Ascending aorta (tissue), 2 donors: ENCODE measurements at regions of chr4 and their contacts with region 1.

Region 1: GRCh38 chr4:1167247-1167949 is 5.0 kb downstream of the SPON2 start:
- DNase-seq: peak in 1 of 2 donors; percentile 89
- H3K4me3 ChIP-seq: peak overlapping the region; percentile 72 to 91
- H3K27ac ChIP-seq: no peak overlapping the region
- H3K4me1 ChIP-seq: peaks cover 8 to 22% of the 10 kb centered on the region in 2 donors
- H3K27me3 ChIP-seq: peaks cover 20% of the 10 kb centered on the region
- CTCF ChIP-seq: peak; percentile 76 to 89 (median 85)

Region 2: DNA sequence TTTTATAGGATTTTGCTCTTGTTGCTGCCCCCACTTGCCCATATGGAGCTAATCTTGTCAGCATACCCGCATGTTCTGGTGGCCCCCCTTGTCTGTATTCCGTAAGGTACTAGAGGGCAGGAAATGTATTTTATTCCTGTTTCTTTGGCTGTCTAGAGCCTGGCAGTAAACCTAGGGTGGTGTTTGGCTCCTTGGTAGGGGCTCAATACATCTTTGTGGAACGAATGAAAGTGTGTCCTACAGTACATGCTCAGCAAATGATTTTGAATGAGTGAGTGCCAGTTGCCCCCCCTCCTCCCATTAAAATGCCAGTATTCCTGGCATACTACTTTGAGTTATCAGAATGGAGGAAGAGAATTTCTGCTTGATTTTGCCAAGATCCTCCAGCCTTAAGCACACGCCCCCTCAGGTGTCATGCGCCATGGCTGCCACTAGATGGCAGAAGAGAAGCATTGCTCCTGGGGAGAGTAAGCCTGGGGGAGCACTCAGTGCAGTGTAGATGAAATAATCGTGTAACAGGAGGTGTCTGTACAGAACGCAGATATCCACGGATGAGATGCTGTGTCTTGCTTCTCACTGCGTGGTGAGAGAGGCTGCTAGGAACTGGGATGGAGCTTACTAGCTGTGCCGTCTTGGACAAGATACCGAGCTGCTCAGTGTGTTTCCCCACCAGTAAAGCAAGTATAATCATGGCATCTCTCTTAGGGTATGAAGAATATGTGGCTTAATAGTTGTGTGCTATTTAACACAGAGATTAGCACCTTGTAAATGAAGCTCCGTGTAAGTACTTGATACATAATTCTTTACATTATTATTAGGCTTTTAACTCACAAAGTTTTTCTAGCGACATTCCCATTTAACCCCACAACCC is 36.8 kb before region 1 on chr4:
- intact Hi-C with region 1: loop called (anchors 1 kb)
- DNase-seq: peak in 1 of 2 donors; percentile 79
- H3K4me3 ChIP-seq: no peak overlapping the region
- H3K27ac ChIP-seq: no peak overlapping the region
- H3K4me1 ChIP-seq: no peaks in the 10 kb centered on the region
- H3K27me3 ChIP-seq: no peaks in the 10 kb centered on the region
- CTCF ChIP-seq: peak; percentile 92 to 100 (median 98)

Region 3: DNA sequence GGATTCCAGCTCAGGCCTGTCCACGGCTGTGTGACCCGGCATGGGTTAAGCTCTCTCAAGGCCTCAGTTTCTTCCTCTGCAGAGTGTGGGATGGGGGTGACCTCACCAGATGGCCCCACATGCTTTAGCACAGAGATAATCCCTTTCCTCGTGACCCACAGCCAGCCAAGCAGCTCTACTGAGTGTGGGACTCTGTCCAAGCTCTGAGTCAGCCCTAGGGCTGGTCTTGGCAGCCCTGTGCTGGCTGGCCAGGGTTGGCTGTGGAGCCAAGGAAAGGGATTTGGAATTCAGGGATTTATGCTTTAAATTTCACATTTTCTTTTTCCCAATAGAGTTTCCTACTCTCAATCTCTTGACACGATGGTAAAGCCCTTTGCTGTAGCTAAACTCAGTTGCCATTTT is 24.7 kb after region 1 on chr4:
- intact Hi-C with region 1: loop called (anchors 2 kb)
- DNase-seq: peak; percentile 76 to 94
- H3K4me3 ChIP-seq: peak overlapping the region in 1 of 2 donors; percentile 25
- H3K27ac ChIP-seq: peak overlapping the region; percentile 79 to 87
- H3K4me1 ChIP-seq: peaks cover 18 to 23% of the 10 kb centered on the region in 2 donors
- H3K27me3 ChIP-seq: no peaks in the 10 kb centered on the region
- CTCF ChIP-seq: no peak

Region 4: GRCh38 chr4:1207603-1208265 is 40.3 kb after region 1 on chr4:
- intact Hi-C with region 1: loop called (anchors 2 kb)
- DNase-seq: peak in 1 of 2 donors; percentile 67
- H3K4me3 ChIP-seq: no peak overlapping the region
- H3K27ac ChIP-seq: no peak overlapping the region
- H3K4me1 ChIP-seq: peaks cover 25 to 31% of the 10 kb centered on the region in 2 donors
- H3K27me3 ChIP-seq: no peaks in the 10 kb centered on the region
- CTCF ChIP-seq: no peak

Region 5: DNA sequence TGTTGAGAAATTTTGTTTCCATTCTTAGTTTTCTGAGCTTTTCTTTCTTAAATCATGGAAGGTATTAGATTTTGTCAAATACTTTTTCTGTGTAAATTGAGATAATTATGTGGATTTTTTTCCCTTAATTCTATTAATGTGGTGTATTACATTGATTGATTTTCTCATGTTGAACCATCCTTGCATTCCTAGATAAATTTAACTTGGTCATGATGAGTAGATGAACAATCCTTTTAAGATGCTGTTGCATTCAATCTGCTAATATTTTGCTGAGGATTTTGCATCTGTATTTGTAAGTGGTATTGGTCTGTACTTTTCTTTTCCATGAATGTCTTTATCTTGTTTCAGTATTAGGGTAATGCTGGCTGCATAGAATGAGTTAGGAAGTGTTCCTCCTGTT is 101.8 kb after region 1 on chr4:
- intact Hi-C with region 1: loop called (anchors 2 kb)
- DNase-seq: no peak
- H3K4me3 ChIP-seq: no peak overlapping the region
- H3K27ac ChIP-seq: no peak overlapping the region
- H3K4me1 ChIP-seq: no peaks in the 10 kb centered on the region
- H3K27me3 ChIP-seq: no peaks in the 10 kb centered on the region
- CTCF ChIP-seq: no peak

Region 6: DNA sequence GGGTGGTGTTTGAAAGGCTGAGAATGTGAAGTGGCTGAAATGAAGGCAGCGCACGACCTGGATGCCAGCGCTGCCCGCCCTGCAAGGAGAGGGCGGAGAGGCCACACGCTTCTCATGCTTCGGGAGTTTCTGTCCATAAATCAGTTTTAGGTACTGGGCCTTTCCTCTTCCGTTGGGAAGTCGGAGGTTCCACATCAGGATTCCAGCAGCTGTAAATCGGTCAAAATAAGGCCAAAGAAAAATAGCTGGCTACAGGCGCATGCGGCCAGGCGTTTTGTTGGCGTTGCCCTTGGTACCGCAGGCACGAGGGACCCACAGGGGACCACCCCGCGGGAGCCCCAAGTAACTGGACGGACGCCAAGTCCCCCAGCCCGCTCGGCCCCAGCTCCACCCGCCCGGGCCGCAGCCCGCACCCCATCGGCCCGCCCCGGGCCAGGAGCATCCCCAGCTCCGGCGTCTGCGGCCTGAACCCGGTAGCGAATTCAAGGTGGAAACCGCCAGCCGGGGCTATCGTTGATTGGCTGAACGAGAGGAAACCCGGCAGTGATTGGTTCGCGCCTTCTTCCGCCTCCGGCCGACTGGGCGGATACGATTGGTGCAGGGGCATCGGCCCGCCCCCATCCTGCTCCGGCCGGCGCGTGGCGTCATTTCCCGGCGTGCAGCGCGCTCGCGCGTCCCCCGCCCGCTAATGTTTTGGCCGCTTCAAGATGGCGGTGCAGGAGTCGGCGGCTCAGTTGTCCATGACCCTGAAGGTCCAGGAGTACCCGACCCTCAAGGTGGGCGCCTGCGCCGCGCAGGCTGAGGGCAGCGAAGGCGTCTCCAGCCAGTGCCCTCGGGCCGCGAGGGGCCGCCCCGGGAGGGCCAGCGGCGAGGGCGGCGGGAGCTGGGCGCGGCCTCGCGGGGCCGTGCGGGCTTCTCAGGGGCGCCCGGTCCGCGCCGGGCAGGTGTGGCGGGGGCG is 122.1 kb after region 1 on chr4 and contains the start of gene MAEA:
- intact Hi-C with region 1: loop called (anchors 1 kb)
- DNase-seq: peak; percentile 85 to 98
- H3K4me3 ChIP-seq: peak within 1 kb of the TSS; percentile 86 to 96
- H3K27ac ChIP-seq: peak within 1 kb of the TSS; percentile 67 to 77
- H3K4me1 ChIP-seq: peaks cover 13 to 27% of the 10 kb centered on the region in 2 donors
- H3K27me3 ChIP-seq: no peaks in the 10 kb centered on the region
- CTCF ChIP-seq: no peak
- total RNA-seq, gene MAEA: 56.3 TPM

Region 7: GRCh38 chr4:1351854-1352633 is 184.6 kb after region 1 on chr4:
- intact Hi-C with region 1: loop called (anchors 5 kb)
- DNase-seq: peak in 1 of 2 donors; percentile 91
- H3K4me3 ChIP-seq: no peak overlapping the region
- H3K27ac ChIP-seq: no peak overlapping the region
- H3K4me1 ChIP-seq: peaks cover 9 to 15% of the 10 kb centered on the region in 2 donors
- H3K27me3 ChIP-seq: no peaks in the 10 kb centered on the region
- CTCF ChIP-seq: peak; percentile 81 to 95 (median 93)